Activated B cell treated with CpG ODN at 0.5 μM for 24 hours (primary cell): ENCODE measurements at regions of chr18 and their contacts with region 1.

Region 1: GRCh38 chr18:33916200-33916599 is 308.5 kb downstream of the NOL4 start:
- DNase-seq: no peak
- ATAC-seq: no peak
- H3K4me3 Mint-ChIP-seq: no peak overlapping the region
- H3K27ac Mint-ChIP-seq: no peak overlapping the region
- H3K4me1 Mint-ChIP-seq: no peaks in the 10 kb centered on the region
- H3K27me3 Mint-ChIP-seq: no peaks in the 10 kb centered on the region
- CTCF ChIP-seq: no peak

Region 2: DNA sequence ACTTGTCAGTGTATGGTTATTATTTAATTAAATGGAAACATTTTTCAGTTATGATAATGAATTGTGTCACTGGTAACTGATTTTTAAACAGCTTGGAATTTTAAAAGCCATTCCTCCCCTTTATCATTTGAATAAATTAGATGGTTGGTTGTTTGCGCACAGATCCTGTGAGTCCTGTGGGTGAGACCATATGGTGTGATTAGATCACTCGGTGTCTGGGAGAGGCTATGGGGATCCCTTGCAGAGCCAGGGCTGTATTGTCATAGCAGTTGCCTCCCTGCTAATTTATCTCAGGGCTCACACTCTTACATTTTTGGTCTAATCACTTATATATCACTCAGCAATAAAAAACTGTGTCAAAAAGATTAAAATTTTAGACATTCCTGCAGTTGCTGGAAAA is 204.7 kb before region 1 on chr18:
- CTCF ChIA-PET with region 1: no interaction called
- POLR2A ChIA-PET with region 1: no interaction called
- intact Hi-C with region 1: loop called (anchors 10 kb)
- DNase-seq: no peak
- ATAC-seq: no peak
- H3K4me3 Mint-ChIP-seq: no peak overlapping the region
- H3K27ac Mint-ChIP-seq: no peak overlapping the region
- H3K4me1 Mint-ChIP-seq: no peaks in the 10 kb centered on the region
- H3K27me3 Mint-ChIP-seq: no peaks in the 10 kb centered on the region
- CTCF ChIP-seq: no peak

Region 3: DNA sequence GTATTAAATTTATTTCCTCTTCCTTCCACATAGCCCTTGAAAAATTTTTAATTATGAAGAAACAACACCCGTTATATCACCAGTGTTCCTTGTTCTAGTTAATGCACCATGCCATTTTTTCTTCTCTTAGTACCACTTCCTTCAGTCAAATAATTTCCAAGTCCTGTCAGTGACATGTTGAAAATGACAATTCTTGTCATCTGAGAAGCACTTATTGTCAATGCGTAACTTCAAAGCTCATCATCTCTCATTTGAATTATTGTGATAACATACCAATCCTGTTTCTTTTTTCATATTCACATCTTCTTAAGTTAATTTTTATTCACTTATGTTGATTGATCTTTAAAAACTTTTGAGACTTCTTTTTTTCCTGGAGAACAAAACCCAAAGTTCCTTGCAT is 17.8 kb before region 1 on chr18:
- CTCF ChIA-PET with region 1: no interaction called
- POLR2A ChIA-PET with region 1: no interaction called
- intact Hi-C with region 1: no loop called
- DNase-seq: no peak
- ATAC-seq: no peak
- H3K4me3 Mint-ChIP-seq: no peak overlapping the region
- H3K27ac Mint-ChIP-seq: no peak overlapping the region
- H3K4me1 Mint-ChIP-seq: no peaks in the 10 kb centered on the region
- H3K27me3 Mint-ChIP-seq: no peaks in the 10 kb centered on the region
- CTCF ChIP-seq: no peak

Region 4: DNA sequence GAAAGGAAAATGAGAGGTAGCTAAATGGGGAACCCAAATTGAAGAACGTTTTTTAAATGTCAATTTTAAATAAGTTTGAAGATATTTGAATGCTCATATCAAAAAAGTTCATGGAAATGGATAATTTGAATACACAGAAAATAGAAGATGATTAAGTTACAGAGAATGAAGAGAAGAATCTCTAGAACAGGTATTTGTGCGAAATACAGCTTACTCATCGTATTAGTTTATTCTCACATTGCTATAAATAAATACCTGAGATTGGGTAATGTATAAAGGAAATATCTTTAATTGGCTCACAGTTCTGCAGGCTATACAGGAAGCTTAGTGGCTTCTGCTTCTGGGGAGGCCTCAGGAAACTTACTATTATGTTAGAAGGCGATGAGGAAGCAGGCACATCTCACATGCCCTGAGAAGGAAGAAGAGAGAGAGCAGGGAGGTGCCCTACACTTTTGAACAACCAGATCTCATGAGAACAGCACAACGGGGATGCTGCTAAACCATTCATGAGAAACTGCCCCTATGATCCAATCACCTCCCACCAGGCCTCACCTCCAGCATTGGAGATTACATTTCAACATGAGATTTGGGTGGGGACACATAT is 704.2 kb after region 1 on chr18:
- CTCF ChIA-PET with region 1: no interaction called
- POLR2A ChIA-PET with region 1: no interaction called
- intact Hi-C with region 1: no loop called
- DNase-seq: no peak
- ATAC-seq: no peak
- H3K4me3 Mint-ChIP-seq: no peak overlapping the region
- H3K27ac Mint-ChIP-seq: no peak overlapping the region
- H3K4me1 Mint-ChIP-seq: no peaks in the 10 kb centered on the region
- H3K27me3 Mint-ChIP-seq: no peaks in the 10 kb centered on the region
- CTCF ChIP-seq: no peak